Common myeloid progenitor, CD34-positive (primary cell): ENCODE measurements at regions of chr19 and their contacts with region 1.

Region 1: DNA sequence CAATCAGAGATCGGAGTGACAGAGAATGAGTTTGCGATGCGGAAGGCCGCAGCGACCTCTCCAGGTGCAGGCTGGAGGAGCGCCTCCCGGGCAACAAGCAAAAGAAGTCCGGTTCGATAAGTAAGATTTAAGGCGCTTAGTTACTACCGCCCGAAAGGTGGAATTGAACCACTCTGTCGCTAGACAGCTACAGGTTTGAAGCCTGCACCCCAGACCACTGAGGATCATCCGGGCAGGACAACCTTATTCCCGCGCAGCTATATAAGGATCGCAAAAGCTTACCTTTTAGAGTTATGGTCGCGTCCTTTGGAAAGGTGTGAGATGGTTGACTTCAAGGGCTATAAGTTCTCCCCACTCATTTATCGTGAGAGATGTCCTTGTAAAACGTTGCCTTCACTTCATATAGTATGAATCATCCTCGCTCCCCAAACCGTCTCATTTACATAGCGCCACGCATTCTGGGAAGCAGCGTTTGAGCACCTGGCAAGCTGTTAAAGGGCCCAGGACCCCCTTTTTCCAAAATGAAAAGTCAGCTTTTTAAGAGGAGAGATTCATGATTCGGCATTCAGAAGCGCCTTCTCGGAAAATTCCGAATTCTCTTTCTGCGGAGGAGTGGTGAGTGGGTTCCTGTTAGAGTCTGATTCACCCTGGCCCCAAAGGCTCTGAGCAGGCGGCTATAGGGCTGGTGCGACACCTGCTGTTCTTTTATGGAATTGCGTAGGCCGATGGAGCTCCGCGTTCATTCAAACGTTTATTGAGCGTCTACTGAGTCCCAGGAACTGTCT is 10.8 kb downstream of the FOSB start:
- DNase-seq: peak; percentile 90 to 93 (median 93)
- H3K4me3 ChIP-seq: peak overlapping the region; percentile 50 to 98 (median 69)
- H3K27ac ChIP-seq: peak overlapping the region; percentile 99
- H3K4me1 ChIP-seq: peaks cover 5 to 21% (median 11%) of the 10 kb centered on the region in 4 experiments
- H3K27me3 ChIP-seq: peaks cover 0 to 30% (median 12%) of the 10 kb centered on the region in 5 experiments

Region 2: DNA sequence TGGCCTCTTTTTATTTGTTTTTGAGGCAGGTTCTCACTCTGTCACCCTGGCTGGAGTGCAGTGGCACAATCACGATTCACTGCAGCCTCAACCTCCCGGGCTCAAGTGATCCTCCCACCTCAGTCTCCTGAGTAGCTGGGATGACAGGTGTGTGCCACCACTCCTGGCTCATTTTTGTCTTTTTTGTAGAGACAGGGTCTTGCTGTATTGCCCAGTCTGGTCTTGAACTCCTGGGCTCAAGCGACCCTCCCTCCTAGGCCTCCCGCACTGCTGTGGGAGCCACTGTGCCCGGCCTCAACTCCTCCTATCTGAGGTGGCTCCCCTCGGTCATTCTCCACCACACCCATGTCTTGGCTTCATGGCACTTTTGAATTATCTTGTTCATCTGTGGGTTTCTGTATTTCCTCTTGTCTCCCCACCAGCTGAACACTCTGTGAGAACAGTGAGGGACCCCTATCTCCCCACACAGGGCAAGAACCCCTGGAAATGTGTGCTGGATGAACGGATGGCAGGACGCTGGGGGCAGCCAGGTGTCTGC is 163.9 kb before region 1 on chr19:
- CTCF ChIA-PET with region 1: no interaction called
- POLR2A ChIA-PET with region 1: no interaction called
- DNase-seq: peak in 1 of 3 donors; percentile 24
- H3K4me3 ChIP-seq: no peak overlapping the region
- H3K27ac ChIP-seq: no peak overlapping the region
- H3K4me1 ChIP-seq: peaks cover 0 to 3% (median 3%) of the 10 kb centered on the region in 4 experiments
- H3K27me3 ChIP-seq: peaks cover 0 to 27% (median 0%) of the 10 kb centered on the region in 5 experiments

Region 3: DNA sequence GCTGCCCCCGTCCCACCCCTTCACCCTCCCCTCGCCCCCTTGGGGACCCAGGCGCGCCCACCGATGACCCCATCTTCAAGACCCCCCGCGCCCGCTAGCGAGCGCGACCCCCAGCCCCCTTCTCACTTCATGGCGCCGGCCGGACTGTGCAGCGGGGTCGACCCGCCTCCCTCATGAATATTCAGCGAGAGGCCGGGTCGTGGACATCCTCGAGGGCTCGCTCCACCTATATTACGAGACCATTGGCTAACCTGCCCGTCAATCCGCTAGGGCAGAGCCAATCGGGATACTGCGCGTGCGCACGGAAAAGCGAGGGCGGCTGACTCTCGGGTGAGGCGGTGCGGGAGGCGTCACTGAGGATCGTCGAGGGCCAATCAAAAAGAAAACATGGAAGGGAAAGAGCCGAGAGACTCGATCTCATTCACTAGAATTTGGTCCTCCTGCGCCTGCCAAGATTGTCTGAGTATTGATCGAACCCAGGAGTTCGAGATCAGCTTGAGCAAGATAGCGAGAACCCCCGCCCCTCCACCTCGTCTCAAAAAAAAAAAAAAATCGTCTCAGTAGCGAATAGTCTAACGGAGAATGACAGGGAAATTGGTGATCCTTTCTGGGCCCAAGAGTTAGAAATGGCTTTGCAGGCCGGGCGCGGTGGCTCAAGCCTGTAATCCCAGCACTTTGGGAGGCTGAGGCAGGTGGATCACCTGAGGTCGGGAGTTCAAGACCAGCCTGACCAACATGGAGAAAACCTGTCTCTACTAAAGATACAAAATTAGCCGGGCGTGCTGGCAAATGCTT is 108.0 kb before region 1 on chr19 and contains the start of gene ERCC2:
- CTCF ChIA-PET with region 1: no interaction called
- POLR2A ChIA-PET with region 1: no interaction called
- DNase-seq: peak; percentile 98 to 99 (median 98)
- H3K4me3 ChIP-seq: peak within 1 kb of the TSS; percentile 53 to 90 (median 79)
- H3K27ac ChIP-seq: peak within 1 kb of the TSS; percentile 55 to 83
- H3K4me1 ChIP-seq: peaks cover 0 to 10% (median 5%) of the 10 kb centered on the region in 4 experiments
- H3K27me3 ChIP-seq: no peaks in the 10 kb centered on the region

Region 4: GRCh38 chr19:45423589-45424190 is 55.0 kb before region 1 on chr19 and contains the start of gene ERCC1:
- CTCF ChIA-PET with region 1: interaction called, 31 read pairs
- POLR2A ChIA-PET with region 1: interaction called, 4 read pairs
- DNase-seq: peak; percentile 75 to 81 (median 77)
- H3K4me3 ChIP-seq: peak within 1 kb of the TSS; percentile 71 to 85 (median 75)
- H3K27ac ChIP-seq: peak within 1 kb of the TSS; percentile 46 to 88
- H3K4me1 ChIP-seq: peaks cover 5 to 69% (median 54%) of the 10 kb centered on the region in 4 experiments
- H3K27me3 ChIP-seq: peaks cover 0 to 4% (median 0%) of the 10 kb centered on the region in 5 experiments

Region 5: DNA sequence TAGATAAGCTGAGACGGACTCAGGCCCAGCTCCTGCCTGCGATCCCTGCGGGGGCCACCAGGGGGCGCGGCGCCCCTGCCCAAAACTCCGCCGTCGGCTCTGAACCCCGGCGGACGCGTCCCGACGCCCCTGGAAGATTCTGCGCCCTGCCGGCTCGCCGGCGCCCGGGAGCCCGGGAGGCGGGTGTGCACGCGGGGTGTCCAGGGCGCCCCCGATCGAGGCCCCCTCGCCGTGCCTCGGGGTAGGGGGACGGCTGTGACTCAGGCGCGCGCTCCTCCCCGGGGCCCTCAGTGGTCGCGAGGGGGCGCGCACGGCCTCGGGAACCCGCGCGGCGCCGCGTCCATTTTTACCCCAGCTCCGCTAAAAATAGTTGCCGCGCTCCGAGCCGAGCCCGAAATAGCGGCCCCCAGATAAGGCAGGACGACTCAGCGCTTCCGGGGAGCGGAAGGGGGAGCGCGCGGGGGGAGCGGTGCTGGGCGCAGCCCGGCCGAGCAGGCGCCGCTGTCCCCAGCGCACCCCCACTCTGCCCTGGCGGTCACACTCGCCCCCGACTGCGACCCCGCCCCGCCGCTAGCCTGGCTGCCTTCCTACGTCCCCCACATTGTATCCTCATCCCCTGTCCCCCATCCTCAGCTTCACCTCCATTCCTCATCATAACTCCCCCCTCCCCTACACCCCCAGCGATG is 38.9 kb before region 1 on chr19:
- CTCF ChIA-PET with region 1: interaction called, 289 read pairs
- POLR2A ChIA-PET with region 1: interaction called, 36 read pairs
- DNase-seq: peak; percentile 75 to 87 (median 86)
- H3K4me3 ChIP-seq: peak overlapping the region; percentile 50 to 77 (median 66)
- H3K27ac ChIP-seq: peak overlapping the region in 1 of 2 experiments; percentile 43
- H3K4me1 ChIP-seq: peaks cover 0 to 33% (median 26%) of the 10 kb centered on the region in 4 experiments
- H3K27me3 ChIP-seq: peaks cover 0 to 12% (median 0%) of the 10 kb centered on the region in 5 experiments

Region 6: DNA sequence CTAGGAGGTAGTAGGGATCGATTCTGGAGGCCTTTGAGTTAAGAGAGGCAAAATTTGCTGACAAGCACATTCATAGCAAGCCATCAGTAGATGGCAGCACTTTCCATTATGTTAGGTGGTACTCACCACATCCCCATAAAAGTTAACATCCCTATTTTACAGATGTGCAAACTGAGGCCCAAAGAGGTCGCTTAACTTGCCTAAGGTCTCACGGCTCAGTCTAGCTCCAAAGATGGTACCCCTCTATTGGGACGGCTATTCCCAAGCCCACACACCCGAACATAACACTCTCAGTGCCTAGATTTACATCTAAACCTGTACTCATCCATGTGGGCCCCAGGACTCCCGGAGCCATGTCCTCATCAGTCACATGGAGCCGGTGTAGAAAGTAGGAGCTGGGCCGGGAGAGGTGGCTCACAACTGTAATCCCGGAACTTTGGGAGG is 32.3 kb before region 1 on chr19:
- CTCF ChIA-PET with region 1: interaction called, 289 read pairs
- POLR2A ChIA-PET with region 1: interaction called, 36 read pairs
- DNase-seq: peak; percentile 74 to 81 (median 79)
- H3K4me3 ChIP-seq: no peak overlapping the region
- H3K27ac ChIP-seq: no peak overlapping the region
- H3K4me1 ChIP-seq: peaks cover 4 to 49% (median 44%) of the 10 kb centered on the region in 4 experiments
- H3K27me3 ChIP-seq: peaks cover 0 to 12% (median 2%) of the 10 kb centered on the region in 5 experiments

Region 7: DNA sequence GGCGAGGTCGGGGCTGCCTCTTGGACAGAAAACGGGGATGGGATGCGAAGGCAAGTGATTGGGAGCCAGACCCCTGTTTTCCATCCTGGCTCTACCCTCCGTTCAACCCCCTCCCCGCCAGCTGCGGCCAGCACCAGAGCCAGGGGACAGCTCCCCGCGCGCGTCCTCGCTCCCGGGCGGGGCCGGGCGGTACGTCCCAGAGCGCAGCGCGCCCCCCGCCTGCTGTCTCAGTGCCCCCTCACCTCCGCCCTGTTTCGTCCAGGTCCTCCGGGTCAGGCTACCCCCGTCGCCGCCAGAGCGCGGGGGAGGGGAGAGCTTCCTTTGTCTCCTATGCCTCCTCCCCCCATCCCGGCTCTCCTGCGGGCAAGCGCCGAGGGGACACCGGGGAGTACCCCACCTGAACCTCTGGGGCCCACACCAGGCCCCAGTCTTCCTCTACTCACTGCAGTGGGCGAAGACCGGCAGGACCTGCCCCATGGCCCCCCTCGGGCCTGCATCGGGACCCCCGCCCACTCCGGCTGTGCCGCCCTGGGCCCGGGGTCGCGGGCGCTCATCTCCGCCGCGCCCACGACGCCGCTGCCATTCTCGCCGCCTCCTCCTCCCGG is 17.8 kb after region 1 on chr19:
- CTCF ChIA-PET with region 1: interaction called, 13 read pairs
- POLR2A ChIA-PET with region 1: interaction called, 3 read pairs
- DNase-seq: peak in 2 of 3 donors; percentile 51 to 62
- H3K4me3 ChIP-seq: peak overlapping the region; percentile 23 to 80 (median 62)
- H3K27ac ChIP-seq: no peak overlapping the region
- H3K4me1 ChIP-seq: peaks cover 0 to 47% (median 39%) of the 10 kb centered on the region in 4 experiments
- H3K27me3 ChIP-seq: peaks cover 0 to 46% (median 24%) of the 10 kb centered on the region in 5 experiments